Cardiac septum (tissue), 1 donor: ENCODE measurements at regions of chr7 and their contacts with region 1.

Region 1: GRCh38 chr7:95989301-95989700 is 216.9 kb downstream of the DYNC1I1 start:
- DNase-seq: no peak

Region 2: GRCh38 chr7:95916573-95917297 is 72.6 kb before region 1 on chr7:
- intact Hi-C with region 1: loop called (anchors 10 kb)
- DNase-seq: peak; percentile 84

Region 3: GRCh38 chr7:96441436-96442084 is 452.3 kb after region 1 on chr7:
- intact Hi-C with region 1: no loop called
- DNase-seq: no peak